ENCODE measurements at regions of chr17 and their contacts with region 1.

Region 1: DNA sequence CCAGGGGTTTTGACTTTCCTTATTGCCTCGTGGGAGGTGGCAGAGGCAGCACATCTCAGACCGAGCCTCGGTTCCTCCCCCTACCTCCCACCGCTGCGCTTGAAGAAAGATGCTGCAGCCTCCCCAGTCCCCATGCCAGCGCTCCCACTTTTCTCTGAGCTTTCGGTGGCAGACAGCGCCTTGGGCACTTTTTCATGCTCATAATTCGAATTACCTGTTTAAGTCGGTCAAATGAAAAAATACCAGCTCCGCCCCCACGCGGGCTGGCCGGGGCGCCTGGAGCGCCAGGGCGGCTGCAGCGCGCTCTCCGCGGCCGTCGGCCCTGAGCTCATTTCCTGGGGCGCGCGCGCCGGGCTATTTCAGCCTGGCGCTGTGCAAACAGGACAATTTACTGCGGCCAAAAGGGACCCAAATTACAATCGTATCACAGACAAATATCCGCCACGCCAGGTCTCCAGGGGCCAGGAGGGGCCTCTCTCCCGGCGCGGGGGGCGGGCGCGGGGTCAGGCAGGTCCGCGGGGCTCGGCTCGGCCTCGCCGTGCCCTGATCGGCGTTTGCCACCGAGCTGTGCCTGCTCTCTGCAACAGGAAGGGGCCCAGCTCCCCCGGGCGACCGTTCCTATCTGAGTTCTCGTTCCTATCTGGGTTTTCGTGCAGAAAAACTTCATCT is 45.0 kb downstream of the SOST start:
- DNase-seq: peak; percentile 63
- ATAC-seq: peak; percentile 85

Region 2: GRCh38 chr17:43645765-43646481 is 67.7 kb before region 1 on chr17:
- intact Hi-C with region 1: no loop called
- DNase-seq: peak; percentile 88
- ATAC-seq: peak; percentile 87

Region 3: DNA sequence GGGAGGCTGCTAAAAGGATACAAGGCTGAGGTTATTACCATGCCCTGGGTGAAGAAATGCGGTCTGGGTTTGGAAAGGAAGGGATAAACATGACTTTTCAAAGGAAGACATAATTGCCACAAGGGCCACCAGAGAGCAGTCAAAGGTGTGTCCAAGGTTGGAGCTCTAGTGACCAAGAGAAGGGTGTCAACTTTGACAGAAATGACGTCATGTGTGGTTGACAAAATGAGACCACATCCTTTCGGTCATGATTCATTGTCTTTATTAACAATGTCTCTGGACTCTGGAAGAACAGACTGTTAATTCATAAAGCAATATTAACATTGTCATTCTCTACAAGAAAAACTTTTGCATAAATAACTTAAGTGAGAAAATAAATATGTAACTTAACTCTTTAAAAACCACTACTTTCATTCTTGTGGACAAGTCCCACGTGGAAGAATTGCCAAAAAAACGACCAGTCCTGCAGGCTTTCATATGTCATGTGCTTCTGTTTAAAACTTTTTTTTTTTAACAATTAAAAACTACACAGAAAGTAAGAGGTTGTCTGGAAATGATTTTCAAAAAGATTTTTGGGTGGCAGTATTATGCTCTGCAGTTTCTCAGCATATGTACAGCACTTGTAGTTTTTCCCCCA is 40.0 kb after region 1 on chr17:
- intact Hi-C with region 1: loop called (anchors 5 kb)
- DNase-seq: no peak
- ATAC-seq: no peak

Measured in Right ventricle myocardium superior (tissue), 1 donor.